CD4-positive, alpha-beta memory T cell (primary cell): ENCODE measurements at regions of chr9 and their contacts with region 1.

Region 1: DNA sequence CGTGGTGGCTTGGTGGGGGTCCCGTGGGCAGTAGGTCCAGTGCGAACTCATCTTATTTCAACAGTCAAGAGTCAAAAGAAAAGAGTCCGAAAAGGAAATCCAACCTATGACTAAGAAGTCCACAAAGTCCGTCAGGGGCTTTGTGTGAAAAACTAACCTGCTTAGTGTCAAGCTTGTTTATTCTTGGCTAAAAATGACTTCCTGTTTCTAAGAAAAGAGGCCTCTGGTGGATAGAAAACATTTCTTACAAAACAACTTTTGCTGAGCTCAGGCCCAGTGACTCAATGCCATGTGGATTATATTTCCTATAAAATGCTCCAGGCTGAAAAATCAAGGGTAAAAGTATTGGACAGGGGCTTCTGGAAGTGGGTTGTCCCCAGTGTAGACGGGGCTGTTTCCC is 105.9 kb downstream of the GADD45G start:
- DNase-seq: no peak
- H3K4me3 ChIP-seq: no peak overlapping the region
- H3K4me3 Mint-ChIP-seq: no peak overlapping the region
- H3K27ac ChIP-seq: no peak overlapping the region
- H3K27ac Mint-ChIP-seq: peak overlapping the region in 1 of 7 donors; percentile 4
- H3K4me1 ChIP-seq: peaks cover 26% of the 10 kb centered on the region
- H3K4me1 Mint-ChIP-seq: peaks cover 17 to 35% (median 23%) of the 10 kb centered on the region in 4 donors
- H3K27me3 ChIP-seq: no peaks in the 10 kb centered on the region
- H3K27me3 Mint-ChIP-seq: no peaks in the 10 kb centered on the region

Region 2: DNA sequence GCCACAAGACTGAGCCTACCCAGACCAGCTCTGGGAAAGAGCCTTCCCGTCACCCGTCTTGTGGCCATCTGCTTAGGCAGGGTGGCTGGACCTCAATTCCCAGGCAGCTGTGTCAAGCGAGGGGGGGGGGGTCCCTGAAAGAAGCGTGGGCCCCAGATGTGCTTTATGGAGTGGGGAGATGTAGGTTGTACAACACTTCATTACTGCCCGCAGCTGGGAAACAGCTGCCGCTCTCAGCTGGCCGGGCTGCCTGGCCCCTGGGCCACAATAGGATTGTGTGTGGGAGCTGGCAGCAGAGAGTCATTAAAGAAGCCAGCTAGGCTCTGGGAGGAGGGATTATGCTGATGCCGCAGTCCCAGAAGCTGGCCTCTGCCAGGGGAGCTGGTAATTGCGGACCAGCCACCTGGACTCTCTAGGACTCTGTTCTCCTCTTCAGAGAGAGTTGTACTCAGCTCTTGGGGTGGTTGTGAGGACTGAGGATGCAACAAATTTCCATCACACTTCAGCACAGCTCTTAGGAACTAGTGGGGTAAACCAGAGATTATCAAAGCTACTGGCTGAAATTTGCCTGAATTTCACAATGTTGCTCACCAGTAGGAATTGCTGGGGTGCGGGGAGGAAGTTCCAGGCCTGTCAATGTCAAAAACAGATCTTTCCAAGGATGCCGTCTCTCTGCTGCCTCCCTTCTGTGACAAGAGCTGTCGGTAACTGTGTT is 39.6 kb after region 1 on chr9:
- CTCF ChIA-PET with region 1: no interaction called
- POLR2A ChIA-PET with region 1: no interaction called
- intact Hi-C with region 1: no loop called
- DNase-seq: no peak
- H3K4me3 ChIP-seq: no peak overlapping the region
- H3K4me3 Mint-ChIP-seq: no peak overlapping the region
- H3K27ac ChIP-seq: no peak overlapping the region
- H3K27ac Mint-ChIP-seq: no peak overlapping the region
- H3K4me1 ChIP-seq: peaks cover 30% of the 10 kb centered on the region
- H3K4me1 Mint-ChIP-seq: peaks cover 22 to 42% (median 35%) of the 10 kb centered on the region in 4 donors
- H3K27me3 ChIP-seq: no peaks in the 10 kb centered on the region
- H3K27me3 Mint-ChIP-seq: no peaks in the 10 kb centered on the region

Region 3: GRCh38 chr9:89768650-89769071 is 58.0 kb after region 1 on chr9:
- CTCF ChIA-PET with region 1: no interaction called
- POLR2A ChIA-PET with region 1: no interaction called
- intact Hi-C with region 1: loop called (anchors 10 kb)
- DNase-seq: no peak
- H3K4me3 ChIP-seq: no peak overlapping the region
- H3K4me3 Mint-ChIP-seq: no peak overlapping the region
- H3K27ac ChIP-seq: no peak overlapping the region
- H3K27ac Mint-ChIP-seq: no peak overlapping the region
- H3K4me1 ChIP-seq: no peaks in the 10 kb centered on the region
- H3K4me1 Mint-ChIP-seq: no peaks in the 10 kb centered on the region
- H3K27me3 ChIP-seq: no peaks in the 10 kb centered on the region
- H3K27me3 Mint-ChIP-seq: no peaks in the 10 kb centered on the region